GM13976 (cell line): ENCODE measurements at regions of chr11 and their contacts with region 1.

Region 1: GRCh38 chr11:61129639-61130523 is 27.6 kb downstream of the CD5 start:
- DNase-seq: peak; percentile 98
- CTCF ChIP-seq: peak; percentile 100

Region 2: GRCh38 chr11:60964801-60965200 is 165.1 kb before region 1 on chr11:
- in situ Hi-C with region 1: loop called (anchors 10 kb)
- DNase-seq: no peak
- CTCF ChIP-seq: no peak